ENCODE measurements at regions of chr17 and their contacts with region 1.

Region 1: GRCh38 chr17:17729620-17730249 is 48.5 kb downstream of the RAI1 start:
- DNase-seq: peak in 1 of 2 experiments; percentile 83
- H3K4me3 ChIP-seq: no peak overlapping the region; a peak in 1 of 8 replicates
- H3K27ac ChIP-seq: no peak overlapping the region
- H3K4me1 ChIP-seq: peaks cover 0 to 14% (median 12%) of the 10 kb centered on the region in 4 experiments; a peak in 6 of 7 replicates
- H3K27me3 ChIP-seq: peaks cover 39 to 47% (median 46%) of the 10 kb centered on the region in 4 experiments
- CTCF ChIP-seq: peak; percentile 73 to 87 (median 77)
- EP300 ChIP-seq: no peak
- POLR2A ChIP-seq: no peak
- RAD21 ChIP-seq: peak; percentile 70 to 84

Region 2: DNA sequence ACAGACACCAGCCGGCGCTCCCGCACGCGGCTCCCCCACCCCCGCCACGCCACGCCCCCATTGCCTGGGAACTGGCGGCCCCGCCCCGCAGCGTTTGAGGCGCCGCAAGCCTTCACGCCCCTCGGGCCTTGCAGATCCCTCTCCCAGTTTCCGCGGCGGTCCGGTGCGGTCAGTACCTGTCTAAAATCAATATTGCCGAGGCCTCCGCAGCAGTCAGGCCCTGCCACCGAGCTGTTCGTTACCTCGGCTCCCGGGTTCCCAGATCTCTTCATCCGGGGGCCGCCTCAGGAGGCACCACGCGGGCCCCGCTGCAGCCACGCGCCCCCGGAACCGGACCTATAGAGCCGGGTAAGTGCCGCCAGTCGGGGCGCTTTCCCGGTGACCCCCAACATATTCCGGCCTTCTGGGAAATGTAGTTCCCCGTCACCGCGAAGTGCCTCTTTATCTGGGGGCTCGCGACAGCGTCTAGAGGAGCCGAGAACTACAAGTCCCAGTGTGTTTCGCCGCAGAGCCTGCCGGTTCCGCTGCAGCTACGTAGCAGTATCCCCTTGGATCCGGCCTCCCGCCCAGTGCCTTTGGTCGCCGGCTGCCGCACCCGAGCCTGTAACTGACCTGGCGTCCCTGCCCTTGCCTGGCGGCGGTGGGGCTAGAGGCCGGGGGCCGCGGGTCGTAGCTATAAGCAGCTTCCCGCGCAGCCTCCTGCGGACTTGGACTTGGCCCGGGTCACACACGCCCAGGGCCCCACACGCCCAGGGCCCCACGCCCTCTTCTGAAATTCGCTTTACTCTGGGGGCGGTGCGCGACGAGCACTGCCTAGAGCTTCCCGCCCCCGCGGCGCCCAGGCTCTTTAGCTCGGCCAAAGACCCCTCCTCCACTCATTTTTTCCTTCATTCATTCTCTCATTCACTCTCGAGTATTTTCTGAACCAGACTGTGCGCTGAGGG is 138.1 kb before region 1 on chr17 and contains the start of gene PEMT:
- CTCF ChIA-PET with region 1: no interaction called
- POLR2A ChIA-PET with region 1: no interaction called
- DNase-seq: peak; percentile 90 to 93
- H3K4me3 ChIP-seq: peak within 1 kb of the TSS; percentile 69 to 87 (median 86)
- H3K27ac ChIP-seq: peak within 1 kb of the TSS; percentile 60; the same call in 1 of the 2 replicates
- H3K4me1 ChIP-seq: peaks cover 0 to 10% (median 2%) of the 10 kb centered on the region in 4 experiments; a peak in 4 of 7 replicates
- H3K27me3 ChIP-seq: no peaks in the 10 kb centered on the region
- CTCF ChIP-seq: no peak
- EP300 ChIP-seq: peak in 1 of 2 experiments; percentile 9; a peak in 1 of 3 replicates
- POLR2A ChIP-seq: peak; percentile 4 to 78; a peak in 2 of 3 replicates
- RAD21 ChIP-seq: no peak
- total RNA-seq, gene PEMT: 40.1 and 42.0 TPM in 2 replicates

Region 3: GRCh38 chr17:17706140-17707060 is 23.3 kb before region 1 on chr17:
- CTCF ChIA-PET with region 1: interaction called, 11 read pairs
- POLR2A ChIA-PET with region 1: interaction called, 5 read pairs
- DNase-seq: no peak
- H3K4me3 ChIP-seq: no peak overlapping the region
- H3K27ac ChIP-seq: no peak overlapping the region
- H3K4me1 ChIP-seq: peaks cover 4 to 26% (median 16%) of the 10 kb centered on the region in 4 experiments
- H3K27me3 ChIP-seq: peaks cover 37 to 65% (median 59%) of the 10 kb centered on the region in 4 experiments
- CTCF ChIP-seq: peak; percentile 20 to 32 (median 26)
- EP300 ChIP-seq: no peak
- POLR2A ChIP-seq: no peak
- RAD21 ChIP-seq: no peak; a peak in 1 of 4 replicates

Region 4: GRCh38 chr17:17712268-17712924 is 17.3 kb before region 1 on chr17:
- CTCF ChIA-PET with region 1: interaction called, 11 read pairs
- POLR2A ChIA-PET with region 1: interaction called, 5 read pairs
- DNase-seq: no peak
- H3K4me3 ChIP-seq: 0 out of 8 replicates have a peak overlapping the region, but pooled peaks of 1 of the 4 experiments have one; percentile 28
- H3K27ac ChIP-seq: no peak overlapping the region
- H3K4me1 ChIP-seq: peaks cover 13 to 37% (median 22%) of the 10 kb centered on the region in 4 experiments
- H3K27me3 ChIP-seq: peaks cover 6 to 66% (median 47%) of the 10 kb centered on the region in 4 experiments
- CTCF ChIP-seq: no peak
- EP300 ChIP-seq: no peak
- POLR2A ChIP-seq: no peak
- RAD21 ChIP-seq: no peak

Region 5: GRCh38 chr17:17774009-17774881 is 44.5 kb after region 1 on chr17:
- CTCF ChIA-PET with region 1: interaction called, 12 read pairs
- POLR2A ChIA-PET with region 1: no interaction called
- DNase-seq: no peak
- H3K4me3 ChIP-seq: no peak overlapping the region
- H3K27ac ChIP-seq: no peak overlapping the region
- H3K4me1 ChIP-seq: peaks cover under 1 to 8% (median 3%) of the 10 kb centered on the region in 4 experiments; a peak in 5 of 7 replicates
- H3K27me3 ChIP-seq: peaks cover 0 to 5% (median under 1%) of the 10 kb centered on the region in 4 experiments; a peak in 2 of 7 replicates
- CTCF ChIP-seq: peak; percentile 51 to 60 (median 51); a peak in 3 of 4 replicates
- EP300 ChIP-seq: no peak
- POLR2A ChIP-seq: no peak
- RAD21 ChIP-seq: peak; percentile 54 to 66

Measured in H1 (cell line).